Naive thymus-derived CD4-positive, alpha-beta T cell (primary cell): ENCODE measurements at regions of chr6 and their contacts with region 1.

Region 1: GRCh38 chr6:89952686-89953085 is 58.4 kb downstream of the GJA10 start:
- DNase-seq: peak in 8 of 9 donors; percentile 44 to 88 (median 85)
- ATAC-seq: peak; percentile 97
- H3K4me3 ChIP-seq: peak overlapping the region; percentile 9
- H3K4me3 Mint-ChIP-seq: peak overlapping the region; percentile 44 to 79 (median 69)
- H3K27ac ChIP-seq: peak overlapping the region; percentile 59
- H3K27ac Mint-ChIP-seq: peak overlapping the region; percentile 70 to 96 (median 93)
- H3K4me1 ChIP-seq: peaks cover 40 to 49% of the 10 kb centered on the region in 2 donors
- H3K4me1 Mint-ChIP-seq: peaks cover 40 to 78% (median 73%) of the 10 kb centered on the region in 7 donors
- H3K27me3 ChIP-seq: no peaks in the 10 kb centered on the region
- H3K27me3 Mint-ChIP-seq: no peaks in the 10 kb centered on the region

Region 2: GRCh38 chr6:89853068-89853467 is 99.6 kb before region 1 on chr6:
- CTCF ChIA-PET with region 1: no interaction called
- POLR2A ChIA-PET with region 1: no interaction called
- intact Hi-C with region 1: no loop called
- DNase-seq: no peak
- ATAC-seq: no peak
- H3K4me3 ChIP-seq: no peak overlapping the region
- H3K4me3 Mint-ChIP-seq: no peak overlapping the region
- H3K27ac ChIP-seq: no peak overlapping the region
- H3K27ac Mint-ChIP-seq: peak overlapping the region in 1 of 9 donors; percentile 45
- H3K4me1 ChIP-seq: no peaks in the 10 kb centered on the region
- H3K4me1 Mint-ChIP-seq: peaks cover 0 to 15% (median 5%) of the 10 kb centered on the region in 7 donors
- H3K27me3 ChIP-seq: no peaks in the 10 kb centered on the region
- H3K27me3 Mint-ChIP-seq: no peaks in the 10 kb centered on the region

Region 3: DNA sequence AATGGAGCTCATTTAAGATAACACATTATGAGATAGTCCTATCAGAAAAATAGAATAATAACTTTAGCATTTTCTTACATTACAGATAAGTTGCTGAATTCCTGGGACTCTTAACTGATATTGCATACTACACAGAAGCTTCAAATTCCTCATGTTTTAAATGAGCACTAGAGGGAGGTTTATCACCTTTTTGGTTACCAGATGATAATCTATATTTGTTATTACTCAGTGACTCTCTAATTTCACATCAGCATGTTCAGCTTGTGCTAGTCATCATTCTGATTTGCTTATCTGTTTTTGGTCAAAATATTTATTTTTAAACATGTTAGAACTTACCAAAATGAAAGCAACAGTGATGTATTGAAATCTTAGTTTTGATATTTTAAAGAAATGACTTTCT is 79.0 kb before region 1 on chr6:
- CTCF ChIA-PET with region 1: no interaction called
- POLR2A ChIA-PET with region 1: no interaction called
- intact Hi-C with region 1: no loop called
- DNase-seq: no peak
- ATAC-seq: no peak
- H3K4me3 ChIP-seq: no peak overlapping the region
- H3K4me3 Mint-ChIP-seq: no peak overlapping the region
- H3K27ac ChIP-seq: no peak overlapping the region
- H3K27ac Mint-ChIP-seq: peak overlapping the region in 1 of 9 donors; percentile 4
- H3K4me1 ChIP-seq: no peaks in the 10 kb centered on the region
- H3K4me1 Mint-ChIP-seq: peaks cover 0 to 7% (median 0%) of the 10 kb centered on the region in 7 donors
- H3K27me3 ChIP-seq: no peaks in the 10 kb centered on the region
- H3K27me3 Mint-ChIP-seq: no peaks in the 10 kb centered on the region

Region 4: DNA sequence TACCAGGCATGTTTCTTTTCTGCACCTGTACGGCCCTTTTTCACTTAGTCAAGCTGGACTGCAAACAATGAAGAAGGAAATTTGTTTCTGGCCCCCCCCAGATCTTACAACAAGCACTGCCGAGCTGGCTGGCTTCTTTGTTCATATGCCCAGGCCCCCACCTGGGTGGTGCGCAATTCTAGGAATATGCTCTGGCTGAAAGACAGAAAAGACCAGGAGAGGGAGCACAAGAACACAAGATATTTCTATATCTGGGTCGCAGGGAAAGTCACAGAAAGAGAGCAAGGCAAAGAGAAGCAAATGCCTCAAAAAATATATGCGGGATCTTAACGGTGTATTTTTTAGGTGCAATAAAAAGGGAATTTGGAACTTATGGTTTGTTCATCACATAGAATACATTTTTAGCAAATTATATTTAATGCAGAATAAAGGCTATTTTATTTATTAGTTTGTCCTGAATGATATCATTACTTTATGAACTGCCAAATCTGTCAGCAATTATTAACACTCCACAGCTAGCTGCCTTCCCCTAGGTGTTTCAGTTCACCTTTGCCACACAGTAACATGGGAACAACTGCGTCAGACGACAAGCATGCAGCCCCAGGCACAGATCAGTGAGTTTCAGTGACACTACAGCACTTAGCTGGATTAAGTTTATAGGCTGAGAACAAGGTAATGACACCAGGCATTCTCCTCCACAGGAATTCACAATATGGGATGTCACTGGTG is 18.1 kb after region 1 on chr6:
- CTCF ChIA-PET with region 1: no interaction called
- POLR2A ChIA-PET with region 1: interaction called, 7 read pairs
- intact Hi-C with region 1: loop called in 1 of 2 experiments (anchors 2 kb)
- DNase-seq: peak in 7 of 9 donors; percentile 31 to 54 (median 39)
- ATAC-seq: peak; percentile 72
- H3K4me3 ChIP-seq: no peak overlapping the region
- H3K4me3 Mint-ChIP-seq: no peak overlapping the region
- H3K27ac ChIP-seq: no peak overlapping the region
- H3K27ac Mint-ChIP-seq: no peak overlapping the region
- H3K4me1 ChIP-seq: peaks cover 0 to 15% of the 10 kb centered on the region in 2 donors
- H3K4me1 Mint-ChIP-seq: peaks cover 9 to 53% (median 40%) of the 10 kb centered on the region in 7 donors
- H3K27me3 ChIP-seq: no peaks in the 10 kb centered on the region
- H3K27me3 Mint-ChIP-seq: no peaks in the 10 kb centered on the region